ENCODE measurements at regions of chr4 and their contacts with region 1.

Region 1: GRCh38 chr4:137819964-137820383 is 287.7 kb upstream of the PCDH18 start:
- DNase-seq: peak; percentile 18
- H3K4me3 ChIP-seq: no peak overlapping the region
- H3K27ac ChIP-seq: no peak overlapping the region
- H3K27me3 ChIP-seq: no peaks in the 10 kb centered on the region
- CTCF ChIP-seq: peak; percentile 71

Region 2: DNA sequence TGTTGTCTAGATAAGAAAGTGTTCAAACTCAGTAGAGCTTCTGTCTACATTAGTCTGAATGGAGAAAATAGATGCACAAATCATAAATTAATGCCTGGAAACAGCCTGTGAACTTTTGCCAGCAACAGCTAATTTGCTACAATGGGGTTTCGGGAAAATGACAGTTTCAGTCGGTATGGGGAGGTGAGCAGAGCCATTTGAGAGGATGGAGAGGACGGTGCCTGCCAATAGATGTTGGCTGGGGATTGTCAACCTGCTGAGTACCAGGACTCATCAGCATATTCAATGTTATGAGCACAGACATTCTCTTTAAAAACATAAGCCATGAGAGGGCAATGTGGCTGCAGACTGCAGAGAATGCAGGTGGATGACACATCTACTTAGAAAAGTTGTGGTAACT is 57.4 kb before region 1 on chr4:
- CTCF ChIA-PET with region 1: no interaction called
- POLR2A ChIA-PET with region 1: no interaction called
- DNase-seq: no peak
- H3K4me3 ChIP-seq: no peak overlapping the region
- H3K27ac ChIP-seq: no peak overlapping the region
- H3K27me3 ChIP-seq: no peaks in the 10 kb centered on the region
- CTCF ChIP-seq: no peak

Region 3: GRCh38 chr4:138174981-138175794 is 355.2 kb after region 1 on chr4:
- CTCF ChIA-PET with region 1: interaction called, 10 read pairs
- POLR2A ChIA-PET with region 1: no interaction called
- DNase-seq: peak; percentile 24
- H3K4me3 ChIP-seq: no peak overlapping the region
- H3K27ac ChIP-seq: no peak overlapping the region
- H3K27me3 ChIP-seq: no peaks in the 10 kb centered on the region
- CTCF ChIP-seq: 0 out of 2 replicates have a peak, but pooled peaks have one; percentile 7

Region 4: GRCh38 chr4:138182838-138183426 is 363.0 kb after region 1 on chr4:
- CTCF ChIA-PET with region 1: interaction called, 19 read pairs
- POLR2A ChIA-PET with region 1: no interaction called
- DNase-seq: peak; percentile 26
- H3K4me3 ChIP-seq: no peak overlapping the region
- H3K27ac ChIP-seq: no peak overlapping the region
- H3K27me3 ChIP-seq: no peaks in the 10 kb centered on the region
- CTCF ChIP-seq: peak; percentile 68